Caco-2 (cell line): ENCODE measurements at regions of chr7 and their contacts with region 1.

Region 1: GRCh38 chr7:100852048-100852872 is at the start of gene SLC12A9:
- DNase-seq: peak; percentile 93 to 95
- H3K4me3 ChIP-seq: peak within 1 kb of the TSS; percentile 74
- H3K4me3 Mint-ChIP-seq: peak within 1 kb of the TSS; percentile 79
- H3K27ac Mint-ChIP-seq: peak within 1 kb of the TSS; percentile 66
- H3K4me1 ChIP-seq: peaks cover 9% of the 10 kb centered on the region
- H3K4me1 Mint-ChIP-seq: peaks cover 15% of the 10 kb centered on the region
- H3K27me3 ChIP-seq: no peaks in the 10 kb centered on the region
- H3K27me3 Mint-ChIP-seq: no peaks in the 10 kb centered on the region
- CTCF ChIP-seq: peak; percentile 89 to 97
- total RNA-seq, gene SLC12A9: 59.0 and 60.7 TPM in 2 replicates

Region 2: GRCh38 chr7:100781255-100781654 is 71.0 kb before region 1 on chr7:
- CTCF ChIA-PET with region 1: interaction called, 11 read pairs
- POLR2A ChIA-PET with region 1: no interaction called
- intact Hi-C with region 1: no loop called
- DNase-seq: no peak
- H3K4me3 ChIP-seq: no peak overlapping the region
- H3K4me3 Mint-ChIP-seq: no peak overlapping the region
- H3K27ac Mint-ChIP-seq: no peak overlapping the region
- H3K4me1 ChIP-seq: no peaks in the 10 kb centered on the region
- H3K4me1 Mint-ChIP-seq: no peaks in the 10 kb centered on the region
- H3K27me3 ChIP-seq: no peaks in the 10 kb centered on the region
- H3K27me3 Mint-ChIP-seq: no peaks in the 10 kb centered on the region
- CTCF ChIP-seq: no peak

Region 3: DNA sequence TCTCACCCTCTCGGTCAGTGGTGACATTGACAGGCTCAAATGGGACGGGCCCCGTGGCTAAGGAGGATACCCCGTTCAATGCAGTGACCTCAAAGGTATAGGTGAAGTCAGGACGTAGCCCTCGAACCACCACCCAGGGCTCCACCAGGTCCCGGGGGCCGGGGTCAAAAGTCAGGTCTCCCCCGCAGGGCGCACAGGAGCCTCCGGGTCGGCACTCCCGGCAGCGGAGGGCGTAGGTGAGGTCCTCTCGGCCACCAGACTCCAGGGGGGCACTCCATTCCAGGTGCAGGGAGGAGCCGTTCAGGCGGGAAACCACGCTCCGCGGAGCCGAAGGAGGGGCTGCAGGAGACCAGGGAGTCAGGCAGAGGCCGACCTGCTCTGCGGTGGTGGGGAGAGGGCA is 32.7 kb before region 1 on chr7:
- CTCF ChIA-PET with region 1: no interaction called
- POLR2A ChIA-PET with region 1: no interaction called
- intact Hi-C with region 1: loop called (anchors 1 kb)
- DNase-seq: no peak
- H3K4me3 ChIP-seq: no peak overlapping the region
- H3K4me3 Mint-ChIP-seq: no peak overlapping the region
- H3K27ac Mint-ChIP-seq: no peak overlapping the region
- H3K4me1 ChIP-seq: no peaks in the 10 kb centered on the region; the same call in 1 of the 2 replicates
- H3K4me1 Mint-ChIP-seq: no peaks in the 10 kb centered on the region
- H3K27me3 ChIP-seq: no peaks in the 10 kb centered on the region
- H3K27me3 Mint-ChIP-seq: no peaks in the 10 kb centered on the region
- CTCF ChIP-seq: no peak

Region 4: DNA sequence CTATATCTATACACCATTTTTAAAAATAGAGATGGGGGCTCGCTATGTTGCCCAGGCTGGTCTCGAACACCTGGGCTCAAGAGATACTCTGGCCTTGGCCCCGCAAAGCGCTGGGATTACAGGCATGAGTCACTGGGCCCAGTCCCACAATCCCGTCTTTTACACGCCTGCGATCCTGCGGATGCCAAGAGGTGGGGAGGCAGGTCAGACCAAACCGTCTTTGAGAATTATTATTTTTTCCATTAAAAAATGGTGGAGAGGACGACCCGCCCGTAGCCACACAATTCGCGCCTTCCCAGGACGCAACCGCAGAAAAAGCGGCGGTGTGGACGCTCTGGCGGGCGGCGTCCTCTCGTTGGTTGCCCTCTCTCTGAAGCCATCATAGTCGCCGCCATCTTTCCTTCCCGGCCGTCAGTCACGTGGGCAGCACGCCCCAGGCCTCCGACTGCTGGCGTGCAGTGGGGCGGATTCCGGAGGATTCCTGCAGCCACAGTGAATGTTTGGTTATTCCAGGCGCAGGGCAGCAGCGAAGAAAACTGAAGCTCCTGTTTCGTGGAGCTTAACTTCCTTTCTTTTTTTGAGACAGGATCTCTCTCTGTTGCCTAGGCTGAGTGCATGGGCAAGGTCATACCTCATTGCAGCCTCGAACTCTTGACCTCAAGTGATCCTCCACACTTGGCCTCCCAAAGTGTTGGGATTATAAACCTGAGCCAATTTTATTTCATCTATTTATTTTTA is 15.0 kb before region 1 on chr7:
- CTCF ChIA-PET with region 1: interaction called, 6 read pairs
- POLR2A ChIA-PET with region 1: interaction called, 3 read pairs
- intact Hi-C with region 1: loop called (anchors 1 kb)
- DNase-seq: peak; percentile 92 to 93
- H3K4me3 ChIP-seq: peak overlapping the region; percentile 42
- H3K4me3 Mint-ChIP-seq: peak overlapping the region; percentile 39
- H3K27ac Mint-ChIP-seq: peak overlapping the region; percentile 85
- H3K4me1 ChIP-seq: peaks cover 13% of the 10 kb centered on the region
- H3K4me1 Mint-ChIP-seq: peaks cover 35% of the 10 kb centered on the region
- H3K27me3 ChIP-seq: no peaks in the 10 kb centered on the region
- H3K27me3 Mint-ChIP-seq: no peaks in the 10 kb centered on the region
- CTCF ChIP-seq: no peak

Region 5: GRCh38 chr7:101058355-101058754 is 206.1 kb after region 1 on chr7:
- CTCF ChIA-PET with region 1: no interaction called
- POLR2A ChIA-PET with region 1: no interaction called
- intact Hi-C with region 1: no loop called
- DNase-seq: peak; percentile 74 to 79
- H3K4me3 ChIP-seq: no peak overlapping the region
- H3K4me3 Mint-ChIP-seq: no peak overlapping the region
- H3K27ac Mint-ChIP-seq: no peak overlapping the region
- H3K4me1 ChIP-seq: no peaks in the 10 kb centered on the region
- H3K4me1 Mint-ChIP-seq: no peaks in the 10 kb centered on the region
- H3K27me3 ChIP-seq: no peaks in the 10 kb centered on the region; the same call in 1 of the 2 replicates
- H3K27me3 Mint-ChIP-seq: peaks cover 22% of the 10 kb centered on the region
- CTCF ChIP-seq: no peak